ENCODE measurements at regions of chrX and their contacts with region 1.

Region 1: GRCh38 chrX:48676106-48676892 is 7.3 kb upstream of the WAS start:
- DNase-seq: peak; percentile 96
- H3K4me3 Mint-ChIP-seq: peak overlapping the region; percentile 95
- H3K27ac Mint-ChIP-seq: peak overlapping the region; percentile 93
- H3K4me1 Mint-ChIP-seq: peaks cover 14% of the 10 kb centered on the region
- H3K27me3 Mint-ChIP-seq: no peaks in the 10 kb centered on the region

Region 2: GRCh38 chrX:47706575-47706974 is 969.7 kb before region 1 on chrX:
- intact Hi-C with region 1: no loop called
- DNase-seq: no peak
- H3K4me3 Mint-ChIP-seq: no peak overlapping the region
- H3K27ac Mint-ChIP-seq: no peak overlapping the region
- H3K4me1 Mint-ChIP-seq: no peaks in the 10 kb centered on the region
- H3K27me3 Mint-ChIP-seq: peaks cover 7% of the 10 kb centered on the region

Region 3: DNA sequence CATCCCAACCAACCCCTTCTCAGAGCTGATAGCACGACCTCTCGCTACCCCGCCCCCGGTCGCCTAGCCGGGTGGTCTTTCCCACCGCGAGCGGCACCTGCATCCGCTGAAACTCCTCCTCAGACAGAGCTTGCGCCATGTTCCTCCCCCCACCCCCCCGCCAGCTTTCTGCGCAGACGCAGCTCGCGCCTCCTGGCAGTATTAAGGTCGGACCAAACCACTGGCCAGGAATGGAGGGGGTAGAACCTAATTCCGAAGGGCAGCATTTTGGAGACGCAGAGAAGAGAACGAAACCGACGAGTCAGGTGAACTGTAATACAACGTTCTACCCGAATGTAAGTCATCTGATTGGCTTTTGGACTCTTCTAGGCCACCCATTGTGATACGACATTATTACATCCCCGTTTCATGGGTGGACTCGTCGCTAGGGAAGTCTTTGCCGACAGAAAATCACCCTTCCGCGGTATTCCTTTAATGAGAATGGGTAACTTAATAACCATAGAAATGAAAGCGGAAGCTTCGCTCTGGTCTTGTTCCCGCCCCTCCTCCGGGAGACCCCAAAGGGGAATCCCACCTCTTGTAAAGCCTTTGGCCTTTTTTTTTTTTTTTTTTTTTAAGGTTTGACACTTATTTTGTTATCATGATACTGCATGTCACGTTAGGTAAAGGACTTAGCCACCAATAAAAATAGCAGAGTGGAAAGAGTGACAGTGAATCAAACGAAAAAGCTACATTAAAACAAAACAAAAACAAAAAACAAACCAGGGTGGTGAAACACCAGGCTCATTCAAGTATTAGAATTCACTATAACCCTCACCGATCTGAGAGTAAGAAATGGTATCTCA is 326.0 kb after region 1 on chrX and contains the start of gene GRIPAP1:
- intact Hi-C with region 1: loop called (anchors 1 kb)
- DNase-seq: peak; percentile 92
- H3K4me3 Mint-ChIP-seq: peak within 1 kb of the TSS; percentile 99
- H3K27ac Mint-ChIP-seq: peak within 1 kb of the TSS; percentile 98
- H3K4me1 Mint-ChIP-seq: peaks cover 28% of the 10 kb centered on the region
- H3K27me3 Mint-ChIP-seq: no peaks in the 10 kb centered on the region
- total RNA-seq, gene GRIPAP1: 85.7 and 87.3 TPM in 2 replicates

Measured in activated CD4-positive, alpha-beta T cell treated with anti-CD3 and anti-CD28 coated beads, Interleukin-2, amount 10 ng/mL, durations not matched to agents 24 days and 14 days (primary cell).